ENCODE measurements at regions of chr1 and their contacts with region 1.

Region 1: GRCh38 chr1:154558575-154559465 is at the start of gene UBE2Q1:
- DNase-seq: peak; percentile 99
- H3K4me3 Mint-ChIP-seq: peak within 1 kb of the TSS; percentile 76
- H3K27ac Mint-ChIP-seq: peak within 1 kb of the TSS; percentile 65
- H3K4me1 Mint-ChIP-seq: peaks cover 18% of the 10 kb centered on the region
- H3K27me3 Mint-ChIP-seq: no peaks in the 10 kb centered on the region
- CTCF ChIP-seq: no peak
- total RNA-seq, gene UBE2Q1: 103 and 111 TPM in 2 replicates

Region 2: GRCh38 chr1:154198756-154199562 is 359.9 kb before region 1 on chr1:
- CTCF ChIA-PET with region 1: no interaction called
- POLR2A ChIA-PET with region 1: no interaction called
- intact Hi-C with region 1: no loop called
- DNase-seq: peak; percentile 80
- H3K4me3 Mint-ChIP-seq: no peak overlapping the region
- H3K27ac Mint-ChIP-seq: no peak overlapping the region
- H3K4me1 Mint-ChIP-seq: peaks cover 12% of the 10 kb centered on the region
- H3K27me3 Mint-ChIP-seq: no peaks in the 10 kb centered on the region
- CTCF ChIP-seq: peak; percentile 45

Region 3: GRCh38 chr1:154546264-154547063 is 12.4 kb before region 1 on chr1:
- CTCF ChIA-PET with region 1: interaction called, 12 read pairs
- POLR2A ChIA-PET with region 1: interaction called, 6 read pairs
- intact Hi-C with region 1: no loop called
- DNase-seq: peak; percentile 83
- H3K4me3 Mint-ChIP-seq: no peak overlapping the region
- H3K27ac Mint-ChIP-seq: no peak overlapping the region
- H3K4me1 Mint-ChIP-seq: peaks cover 10% of the 10 kb centered on the region
- H3K27me3 Mint-ChIP-seq: peaks cover 30% of the 10 kb centered on the region
- CTCF ChIP-seq: peak; percentile 87

Region 4: DNA sequence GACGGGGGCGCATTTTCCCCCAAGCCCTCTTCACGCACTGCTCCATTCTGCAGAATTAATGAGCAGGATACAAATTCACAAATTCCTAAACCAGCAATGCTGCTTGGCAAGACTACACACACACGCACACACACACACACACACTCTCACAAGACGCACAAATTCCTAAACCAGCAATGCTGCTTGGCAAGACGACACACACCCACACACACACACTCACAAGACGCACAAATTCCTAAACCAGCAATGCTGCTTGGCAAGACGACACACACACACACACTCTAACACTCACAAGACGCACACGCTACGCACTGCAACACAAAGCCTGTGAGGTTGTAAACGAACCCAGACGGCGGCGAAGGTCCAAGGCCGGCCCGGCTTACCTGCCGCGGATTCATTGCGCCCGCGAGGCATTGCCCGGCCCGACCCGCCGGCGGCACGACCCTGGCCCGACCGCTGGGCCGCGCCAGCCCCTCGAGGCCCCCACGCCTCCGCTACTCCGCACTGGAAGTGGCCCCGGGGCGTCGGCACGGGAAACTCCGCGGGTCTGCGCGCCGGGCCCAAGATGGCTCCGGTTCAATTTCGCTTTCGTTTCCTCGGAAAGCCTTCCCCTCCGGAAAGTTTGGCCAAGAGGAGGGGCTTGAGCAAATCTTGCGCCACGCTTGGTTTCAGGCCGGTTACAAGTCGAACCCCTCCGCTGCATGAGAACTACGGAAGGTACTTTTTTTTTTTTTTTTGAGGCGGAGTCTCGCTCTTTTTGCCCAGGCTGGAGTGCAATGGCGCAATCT is 49.0 kb after region 1 on chr1 and contains the start of gene ADAR:
- CTCF ChIA-PET with region 1: interaction called, 13 read pairs
- POLR2A ChIA-PET with region 1: interaction called, 10 read pairs
- intact Hi-C with region 1: loop called (anchors 2 kb)
- DNase-seq: peak; percentile 99
- H3K4me3 Mint-ChIP-seq: peak within 1 kb of the TSS; percentile 96
- H3K27ac Mint-ChIP-seq: peak within 1 kb of the TSS; percentile 92
- H3K4me1 Mint-ChIP-seq: peaks cover 42% of the 10 kb centered on the region
- H3K27me3 Mint-ChIP-seq: no peaks in the 10 kb centered on the region
- CTCF ChIP-seq: no peak
- total RNA-seq, gene ADAR: 168 and 196 TPM in 2 replicates

Region 5: GRCh38 chr1:154669464-154670282 is 110.9 kb after region 1 on chr1:
- CTCF ChIA-PET with region 1: interaction called, 20 read pairs
- POLR2A ChIA-PET with region 1: interaction called, 4 read pairs
- intact Hi-C with region 1: loop called (anchors 1 kb)
- DNase-seq: peak; percentile 88
- H3K4me3 Mint-ChIP-seq: no peak overlapping the region
- H3K27ac Mint-ChIP-seq: no peak overlapping the region
- H3K4me1 Mint-ChIP-seq: no peaks in the 10 kb centered on the region
- H3K27me3 Mint-ChIP-seq: peaks cover 19% of the 10 kb centered on the region
- CTCF ChIP-seq: peak; percentile 96

Region 6: DNA sequence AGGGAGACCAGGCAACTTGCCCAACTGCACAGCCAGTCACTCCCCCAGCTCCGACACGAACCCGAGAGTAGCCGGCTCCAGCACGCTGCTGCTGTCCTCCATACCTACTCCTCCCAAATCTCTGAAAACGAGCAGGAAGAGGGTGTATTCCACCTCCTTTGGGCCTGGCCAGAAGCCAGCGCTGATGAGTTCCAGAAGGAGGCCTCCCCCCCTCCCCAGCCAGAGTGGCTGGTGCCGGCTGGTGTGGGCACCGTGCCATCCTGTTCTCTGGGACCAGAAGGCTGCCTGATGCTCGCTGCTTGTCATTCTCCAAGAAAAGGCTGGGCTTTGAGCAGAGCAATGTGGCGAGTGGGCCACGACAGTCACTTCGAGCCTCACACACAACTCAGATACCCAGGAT is 289.1 kb after region 1 on chr1:
- CTCF ChIA-PET with region 1: no interaction called
- POLR2A ChIA-PET with region 1: no interaction called
- intact Hi-C with region 1: no loop called
- DNase-seq: peak; percentile 20
- H3K4me3 Mint-ChIP-seq: no peak overlapping the region
- H3K27ac Mint-ChIP-seq: no peak overlapping the region
- H3K4me1 Mint-ChIP-seq: no peaks in the 10 kb centered on the region
- H3K27me3 Mint-ChIP-seq: peaks cover 42% of the 10 kb centered on the region
- CTCF ChIP-seq: no peak

Region 7: DNA sequence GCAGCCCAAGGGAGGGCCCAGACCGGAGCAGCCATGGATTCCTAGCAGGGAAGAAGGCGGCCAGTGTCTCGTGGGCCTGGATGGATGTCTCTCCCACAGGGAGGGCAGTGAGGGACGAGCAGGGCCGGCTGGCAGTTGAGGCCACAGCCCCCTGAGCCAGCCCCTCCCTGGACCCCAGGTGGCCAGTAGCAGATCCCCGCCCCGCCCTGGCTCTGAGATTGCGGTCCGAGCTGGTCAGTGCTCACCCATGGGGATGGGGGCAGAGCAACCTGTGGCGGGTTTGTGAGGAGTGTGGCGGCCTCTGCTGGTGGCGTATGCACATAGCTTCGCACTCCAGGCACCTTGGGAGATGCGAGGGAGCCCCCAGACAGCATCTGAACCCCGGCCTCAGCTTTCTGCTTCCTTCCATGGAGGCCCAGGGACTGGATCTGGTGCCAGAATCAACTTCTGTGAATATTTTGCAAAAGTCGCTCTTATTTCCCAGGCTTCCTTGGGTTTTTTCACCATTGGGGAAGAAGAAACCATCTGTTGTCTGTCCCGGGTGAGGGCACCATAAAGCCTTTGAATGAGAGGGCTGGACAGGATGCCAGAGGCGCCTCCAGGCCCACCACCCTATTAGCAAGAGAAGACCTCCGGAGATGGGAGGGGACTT is 319.7 kb after region 1 on chr1:
- CTCF ChIA-PET with region 1: interaction called, 16 read pairs
- POLR2A ChIA-PET with region 1: interaction called, 12 read pairs
- intact Hi-C with region 1: loop called (anchors 1 kb)
- DNase-seq: peak; percentile 81
- H3K4me3 Mint-ChIP-seq: no peak overlapping the region
- H3K27ac Mint-ChIP-seq: no peak overlapping the region
- H3K4me1 Mint-ChIP-seq: peaks cover 14% of the 10 kb centered on the region
- H3K27me3 Mint-ChIP-seq: no peaks in the 10 kb centered on the region
- CTCF ChIP-seq: peak; percentile 97

Region 8: DNA sequence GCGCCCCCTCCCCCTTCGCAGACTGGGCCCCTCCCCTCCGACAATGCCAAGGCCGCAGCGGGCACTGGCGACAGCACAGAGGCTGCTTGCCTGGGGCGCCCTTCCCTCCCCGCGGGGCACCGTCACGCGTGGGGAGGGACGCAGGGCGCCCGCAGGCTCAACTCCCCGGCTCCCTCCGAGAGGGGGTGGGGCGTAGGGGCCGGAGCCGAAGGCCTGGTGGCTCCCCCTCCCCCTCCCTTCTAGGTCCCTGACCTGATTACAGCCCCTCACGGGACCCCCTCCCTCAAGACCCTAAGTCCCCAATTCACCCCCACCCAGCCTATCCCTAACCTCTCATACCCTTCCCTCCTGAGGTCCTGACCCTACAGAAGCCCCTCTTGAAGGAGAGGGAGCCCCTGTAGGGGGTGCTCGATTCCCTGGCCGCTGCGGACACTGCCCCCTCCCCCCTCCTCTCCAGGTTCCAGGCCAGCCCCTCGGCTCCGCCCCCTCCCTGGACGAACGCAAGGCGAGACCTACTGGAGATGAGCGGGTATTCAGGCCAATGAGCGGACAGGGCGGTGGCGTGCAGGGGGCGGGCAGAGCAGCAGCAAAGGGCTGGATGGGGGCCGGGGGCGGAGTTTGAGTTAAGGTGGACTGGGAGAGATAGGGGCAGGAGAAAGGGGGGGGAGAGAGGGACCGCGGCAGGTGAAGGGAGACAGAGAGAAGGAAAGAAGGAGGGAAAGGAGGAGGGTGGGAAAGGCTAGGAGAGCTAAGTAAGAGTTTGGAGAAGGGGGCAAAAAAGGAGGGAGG is 443.0 kb after region 1 on chr1:
- CTCF ChIA-PET with region 1: interaction called, 6 read pairs
- POLR2A ChIA-PET with region 1: no interaction called
- intact Hi-C with region 1: loop called (anchors 5 kb)
- DNase-seq: peak; percentile 100
- H3K4me3 Mint-ChIP-seq: peak overlapping the region; percentile 90
- H3K27ac Mint-ChIP-seq: peak overlapping the region; percentile 97
- H3K4me1 Mint-ChIP-seq: peaks cover 52% of the 10 kb centered on the region
- H3K27me3 Mint-ChIP-seq: no peaks in the 10 kb centered on the region
- CTCF ChIP-seq: peak; percentile 34